AG04450 (cell line): ENCODE measurements at regions of chr17 and their contacts with region 1.

Region 1: GRCh38 chr17:48625495-48626244 is 488 bp downstream of the HOXB9 start:
- DNase-seq: no peak
- H3K4me3 ChIP-seq: peak overlapping the region; percentile 22
- H3K27ac ChIP-seq: no peak overlapping the region
- H3K27me3 ChIP-seq: peaks cover 98% of the 10 kb centered on the region
- CTCF ChIP-seq: no peak

Region 2: GRCh38 chr17:48636177-48637018 is 10.7 kb after region 1 on chr17:
- CTCF ChIA-PET with region 1: interaction called, 11 read pairs
- POLR2A ChIA-PET with region 1: no interaction called
- DNase-seq: no peak
- H3K4me3 ChIP-seq: no peak overlapping the region
- H3K27ac ChIP-seq: no peak overlapping the region
- H3K27me3 ChIP-seq: peaks cover 97% of the 10 kb centered on the region
- CTCF ChIP-seq: peak; percentile 57